ENCODE measurements at regions of chr12 and their contacts with region 1.

Region 1: GRCh38 chr12:29317556-29318363 is 63.2 kb downstream of the ERGIC2 start:
- DNase-seq: peak; percentile 49 to 76
- H3K4me3 ChIP-seq: no peak overlapping the region
- H3K4me1 ChIP-seq: no peaks in the 10 kb centered on the region
- H3K27me3 ChIP-seq: no peaks in the 10 kb centered on the region

Region 2: GRCh38 chr12:29238822-29239291 is 78.9 kb before region 1 on chr12:
- in situ Hi-C with region 1: no loop called
- DNase-seq: no peak
- H3K4me3 ChIP-seq: no peak overlapping the region
- H3K4me1 ChIP-seq: no peaks in the 10 kb centered on the region
- H3K27me3 ChIP-seq: no peaks in the 10 kb centered on the region

Region 3: DNA sequence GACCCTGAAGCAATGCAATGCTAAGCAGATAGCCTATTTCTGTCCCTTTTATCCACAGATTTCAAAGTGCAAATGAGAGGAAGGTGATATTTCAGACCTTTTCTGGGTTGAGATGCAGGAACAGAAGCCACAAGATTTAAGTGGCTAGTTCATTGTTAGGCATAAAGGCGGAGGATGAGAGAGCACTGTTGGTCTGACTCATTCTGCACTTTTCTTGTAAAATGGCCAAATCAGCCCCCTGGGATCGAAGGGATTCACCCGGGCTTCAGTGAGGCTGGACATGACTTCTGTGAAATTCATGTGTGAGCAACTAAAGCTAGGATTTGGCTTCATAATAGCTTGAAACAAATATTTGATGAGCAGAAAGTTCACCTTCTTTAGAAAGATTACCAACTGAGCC is 281.6 kb after region 1 on chr12:
- in situ Hi-C with region 1: no loop called
- DNase-seq: peak; percentile 46
- H3K4me3 ChIP-seq: no peak overlapping the region
- H3K4me1 ChIP-seq: peaks cover 13% of the 10 kb centered on the region
- H3K27me3 ChIP-seq: no peaks in the 10 kb centered on the region

Region 4: GRCh38 chr12:30806989-30807694 is 1489.4 kb after region 1 on chr12:
- in situ Hi-C with region 1: loop called (anchors 25 kb)
- DNase-seq: peak; percentile 57 to 62
- H3K4me3 ChIP-seq: no peak overlapping the region
- H3K4me1 ChIP-seq: peaks cover 10% of the 10 kb centered on the region
- H3K27me3 ChIP-seq: peaks cover 4% of the 10 kb centered on the region; the same call in 1 of the 2 replicates